ENCODE measurements at regions of chr6 and their contacts with region 1.

Region 1: GRCh38 chr6:110682460-110682853 is 132.8 kb downstream of the CDK19 start:
- DNase-seq: peak; percentile 86
- ATAC-seq: peak; percentile 99
- H3K4me3 Mint-ChIP-seq: no peak overlapping the region
- H3K27ac Mint-ChIP-seq: peak overlapping the region; percentile 65
- H3K4me1 Mint-ChIP-seq: peaks cover 15% of the 10 kb centered on the region
- H3K27me3 Mint-ChIP-seq: no peaks in the 10 kb centered on the region

Region 2: GRCh38 chr6:110815217-110816109 is 133.0 kb after region 1 on chr6 and contains the start of gene CDK19:
- CTCF ChIA-PET with region 1: interaction called, 17 read pairs
- POLR2A ChIA-PET with region 1: interaction called, 12 read pairs
- DNase-seq: peak; percentile 99
- ATAC-seq: peak; percentile 84
- H3K4me3 Mint-ChIP-seq: peak within 1 kb of the TSS; percentile 98
- H3K27ac Mint-ChIP-seq: peak within 1 kb of the TSS; percentile 98
- H3K4me1 Mint-ChIP-seq: peaks cover 37% of the 10 kb centered on the region
- H3K27me3 Mint-ChIP-seq: no peaks in the 10 kb centered on the region
- total RNA-seq, gene CDK19: 21.6 to 26.2 TPM

Region 3: DNA sequence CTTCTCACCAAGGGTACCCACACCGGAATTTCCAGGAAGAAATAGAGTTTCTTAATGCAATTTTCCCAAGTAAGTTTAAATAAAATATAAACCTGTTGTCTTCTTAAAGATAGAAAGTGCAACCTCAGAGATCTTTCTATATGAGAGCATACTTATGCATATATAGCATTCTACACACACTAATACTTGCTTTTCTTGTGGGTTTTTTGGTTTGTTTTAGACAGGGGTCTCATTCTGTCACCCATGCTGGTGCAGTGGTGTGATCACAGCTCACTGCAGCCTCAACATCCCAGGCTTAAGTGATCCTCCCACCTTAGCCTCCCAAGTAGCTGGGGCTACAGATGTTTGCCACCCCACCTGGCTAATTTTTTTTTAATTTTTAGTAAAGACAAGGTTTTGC is 207.8 kb after region 1 on chr6:
- CTCF ChIA-PET with region 1: interaction called, 12 read pairs
- POLR2A ChIA-PET with region 1: no interaction called
- DNase-seq: no peak
- ATAC-seq: no peak
- H3K4me3 Mint-ChIP-seq: no peak overlapping the region
- H3K27ac Mint-ChIP-seq: no peak overlapping the region
- H3K4me1 Mint-ChIP-seq: peaks cover 20% of the 10 kb centered on the region
- H3K27me3 Mint-ChIP-seq: no peaks in the 10 kb centered on the region

Region 4: DNA sequence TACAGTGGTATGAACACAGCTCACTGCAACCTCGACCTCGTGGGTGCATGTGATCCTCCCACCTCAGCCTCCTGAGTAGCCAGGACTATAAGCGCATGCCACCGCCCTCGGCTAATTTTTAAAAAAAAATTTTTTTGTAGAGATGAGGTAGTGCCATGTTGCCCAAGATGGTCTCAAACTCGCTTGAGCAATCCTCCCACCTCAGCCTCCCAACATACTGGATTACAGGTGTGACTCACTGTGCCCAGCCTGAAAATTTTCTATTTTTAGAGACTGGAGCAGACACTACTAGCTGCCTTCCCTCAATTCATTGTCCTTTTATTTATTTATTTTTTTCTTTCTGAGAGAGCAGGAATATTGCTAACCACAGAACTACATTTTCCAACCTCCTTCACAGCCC is 255.7 kb after region 1 on chr6:
- CTCF ChIA-PET with region 1: no interaction called
- POLR2A ChIA-PET with region 1: no interaction called
- DNase-seq: no peak
- ATAC-seq: no peak
- H3K4me3 Mint-ChIP-seq: no peak overlapping the region
- H3K27ac Mint-ChIP-seq: no peak overlapping the region
- H3K4me1 Mint-ChIP-seq: peaks cover 4% of the 10 kb centered on the region
- H3K27me3 Mint-ChIP-seq: no peaks in the 10 kb centered on the region

Region 5: GRCh38 chr6:110958329-110959192 is 276.1 kb after region 1 on chr6 and contains the start of gene GTF3C6:
- CTCF ChIA-PET with region 1: interaction called, 50 read pairs
- POLR2A ChIA-PET with region 1: interaction called, 3 read pairs
- DNase-seq: peak; percentile 96
- ATAC-seq: peak; percentile 99
- H3K4me3 Mint-ChIP-seq: peak within 1 kb of the TSS; percentile 98
- H3K27ac Mint-ChIP-seq: peak within 1 kb of the TSS; percentile 100
- H3K4me1 Mint-ChIP-seq: peaks cover 18% of the 10 kb centered on the region
- H3K27me3 Mint-ChIP-seq: no peaks in the 10 kb centered on the region
- total RNA-seq, gene GTF3C6: 93.9 to 99.8 TPM